Breast epithelium (tissue), 4 donors: ENCODE measurements at regions of chr15 and their contacts with region 1.

Region 1: GRCh38 chr15:86255247-86255646 is 175.6 kb downstream of the AGBL1 start:
- DNase-seq: no peak
- H3K4me3 ChIP-seq: no peak overlapping the region
- H3K27ac ChIP-seq: no peak overlapping the region
- H3K4me1 ChIP-seq: no peaks in the 10 kb centered on the region
- H3K27me3 ChIP-seq: no peaks in the 10 kb centered on the region
- CTCF ChIP-seq: no peak
- POLR2A ChIP-seq: no peak

Region 2: DNA sequence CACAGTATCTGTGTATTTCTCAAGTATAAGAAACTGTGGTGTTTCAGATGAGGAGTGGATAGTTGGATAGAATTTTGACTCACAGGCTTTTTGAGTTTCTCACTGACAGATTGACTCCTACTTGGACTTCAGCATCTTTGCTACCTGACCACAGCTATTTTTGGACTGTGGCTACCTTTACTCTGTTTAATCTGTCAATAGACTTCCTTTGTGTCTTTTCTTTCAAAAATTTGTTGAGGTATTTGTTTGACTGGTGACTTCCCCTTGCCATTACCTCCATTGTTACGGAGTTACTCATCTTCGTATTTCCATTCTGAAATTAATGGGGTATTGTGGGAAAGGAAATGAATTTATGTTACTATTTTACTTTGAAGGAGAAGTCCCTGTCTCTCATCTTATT is 51.8 kb before region 1 on chr15:
- intact Hi-C with region 1: no loop called
- DNase-seq: no peak
- H3K4me3 ChIP-seq: no peak overlapping the region
- H3K27ac ChIP-seq: no peak overlapping the region
- H3K4me1 ChIP-seq: no peaks in the 10 kb centered on the region
- H3K27me3 ChIP-seq: no peaks in the 10 kb centered on the region
- CTCF ChIP-seq: no peak
- POLR2A ChIP-seq: no peak

Region 3: GRCh38 chr15:86213420-86214287 is 41.6 kb before region 1 on chr15:
- intact Hi-C with region 1: loop called (anchors 2 kb)
- DNase-seq: no peak
- H3K4me3 ChIP-seq: no peak overlapping the region
- H3K27ac ChIP-seq: no peak overlapping the region
- H3K4me1 ChIP-seq: no peaks in the 10 kb centered on the region
- H3K27me3 ChIP-seq: no peaks in the 10 kb centered on the region
- CTCF ChIP-seq: no peak
- POLR2A ChIP-seq: no peak

Region 4: GRCh38 chr15:86432861-86433260 is 177.6 kb after region 1 on chr15:
- intact Hi-C with region 1: no loop called
- DNase-seq: no peak
- H3K4me3 ChIP-seq: no peak overlapping the region
- H3K27ac ChIP-seq: no peak overlapping the region
- H3K4me1 ChIP-seq: no peaks in the 10 kb centered on the region
- H3K27me3 ChIP-seq: no peaks in the 10 kb centered on the region
- CTCF ChIP-seq: no peak
- POLR2A ChIP-seq: no peak